ENCODE measurements at regions of chr1 and their contacts with region 1.

Region 1: DNA sequence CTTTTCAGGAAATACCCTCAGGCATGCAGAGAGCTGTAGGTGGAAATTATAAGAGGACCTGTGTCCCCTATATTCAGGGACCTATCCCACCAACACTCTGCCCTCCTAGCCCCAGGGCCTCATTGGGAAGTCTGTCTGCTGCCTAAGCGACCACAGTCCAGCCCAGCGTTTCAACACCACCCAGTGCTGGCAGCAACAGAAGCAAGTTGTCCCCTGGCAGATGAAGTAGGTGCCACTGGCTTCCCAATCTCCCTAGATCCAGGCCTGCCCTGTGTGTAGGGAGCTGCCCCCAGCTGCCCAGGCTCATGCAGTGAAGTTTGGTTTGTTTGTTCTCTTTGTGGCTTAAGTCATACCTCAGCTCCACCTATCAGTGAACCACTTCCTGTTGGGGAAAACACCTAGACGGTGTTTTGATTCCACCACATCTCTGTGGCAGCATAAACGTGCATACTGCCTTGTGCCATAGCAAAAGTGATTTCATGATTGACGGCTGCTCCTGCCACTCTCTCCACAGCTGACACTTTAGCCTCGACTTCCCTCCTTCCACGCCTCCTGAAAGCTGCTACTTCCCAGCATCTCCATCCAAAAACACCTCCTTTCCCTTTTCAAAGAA is 8.1 kb upstream of the LEFTY1 start:
- DNase-seq: peak; percentile 87 to 92 (median 88)
- H3K4me3 ChIP-seq: peak overlapping the region in 1 of 2 donors; percentile 13
- H3K4me3 Mint-ChIP-seq: peak overlapping the region; percentile 72 to 92 (median 82)
- H3K27ac ChIP-seq: peak overlapping the region; percentile 72
- H3K27ac Mint-ChIP-seq: peak overlapping the region; percentile 94 to 99 (median 98)
- H3K4me1 ChIP-seq: peaks cover 45% of the 10 kb centered on the region
- H3K4me1 Mint-ChIP-seq: peaks cover 34 to 65% (median 46%) of the 10 kb centered on the region in 4 donors
- H3K27me3 ChIP-seq: no peaks in the 10 kb centered on the region
- H3K27me3 Mint-ChIP-seq: no peaks in the 10 kb centered on the region

Region 2: DNA sequence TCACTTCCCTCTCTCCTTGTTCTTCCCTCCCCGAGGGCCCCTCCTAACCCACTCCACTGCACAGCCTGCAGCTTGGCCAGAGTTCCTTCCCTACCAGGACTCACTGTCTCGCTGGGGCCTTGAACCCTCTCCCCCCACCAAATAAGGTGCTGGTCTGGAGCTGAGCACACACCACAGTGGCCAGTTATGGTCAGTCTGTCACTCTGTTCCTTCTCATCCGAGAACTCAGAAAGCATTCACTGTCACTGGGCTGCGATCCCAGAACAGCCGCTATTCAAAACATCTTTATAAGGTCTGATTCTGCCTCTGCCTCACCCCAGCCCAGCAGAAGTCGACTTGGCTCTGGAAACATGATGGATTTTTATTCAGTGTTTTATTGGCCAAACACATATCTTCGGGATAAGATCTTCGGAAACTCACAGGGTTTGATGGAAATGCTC is 449.4 kb before region 1 on chr1:
- CTCF ChIA-PET with region 1: no interaction called
- POLR2A ChIA-PET with region 1: interaction called, 15 read pairs
- intact Hi-C with region 1: no loop called
- DNase-seq: no peak
- H3K4me3 ChIP-seq: no peak overlapping the region
- H3K4me3 Mint-ChIP-seq: no peak overlapping the region
- H3K27ac ChIP-seq: no peak overlapping the region
- H3K27ac Mint-ChIP-seq: peak overlapping the region in 1 of 7 donors; percentile 17
- H3K4me1 ChIP-seq: peaks cover 47% of the 10 kb centered on the region
- H3K4me1 Mint-ChIP-seq: peaks cover 29 to 55% (median 43%) of the 10 kb centered on the region in 4 donors
- H3K27me3 ChIP-seq: no peaks in the 10 kb centered on the region
- H3K27me3 Mint-ChIP-seq: no peaks in the 10 kb centered on the region

Region 3: GRCh38 chr1:225845571-225846259 is 51.3 kb before region 1 on chr1:
- CTCF ChIA-PET with region 1: no interaction called
- POLR2A ChIA-PET with region 1: interaction called, 16 read pairs
- intact Hi-C with region 1: no loop called
- DNase-seq: peak in 3 of 5 donors; percentile 33 to 40 (median 33)
- H3K4me3 ChIP-seq: no peak overlapping the region
- H3K4me3 Mint-ChIP-seq: peak overlapping the region in 1 of 8 donors; percentile 36
- H3K27ac ChIP-seq: no peak overlapping the region
- H3K27ac Mint-ChIP-seq: no peak overlapping the region
- H3K4me1 ChIP-seq: peaks cover 41% of the 10 kb centered on the region
- H3K4me1 Mint-ChIP-seq: peaks cover 25 to 57% (median 38%) of the 10 kb centered on the region in 4 donors
- H3K27me3 ChIP-seq: no peaks in the 10 kb centered on the region
- H3K27me3 Mint-ChIP-seq: no peaks in the 10 kb centered on the region

Region 4: GRCh38 chr1:225866061-225866837 is 30.8 kb before region 1 on chr1:
- CTCF ChIA-PET with region 1: no interaction called
- POLR2A ChIA-PET with region 1: interaction called, 730 read pairs
- intact Hi-C with region 1: loop called (anchors 1 kb)
- DNase-seq: peak; percentile 69 to 89 (median 73)
- H3K4me3 ChIP-seq: no peak overlapping the region
- H3K4me3 Mint-ChIP-seq: peak overlapping the region in 7 of 8 donors; percentile 58 to 85 (median 76)
- H3K27ac ChIP-seq: peak overlapping the region; percentile 52
- H3K27ac Mint-ChIP-seq: peak overlapping the region; percentile 85 to 95 (median 90)
- H3K4me1 ChIP-seq: peaks cover 42% of the 10 kb centered on the region
- H3K4me1 Mint-ChIP-seq: peaks cover 31 to 60% (median 44%) of the 10 kb centered on the region in 4 donors
- H3K27me3 ChIP-seq: no peaks in the 10 kb centered on the region
- H3K27me3 Mint-ChIP-seq: no peaks in the 10 kb centered on the region

Region 5: DNA sequence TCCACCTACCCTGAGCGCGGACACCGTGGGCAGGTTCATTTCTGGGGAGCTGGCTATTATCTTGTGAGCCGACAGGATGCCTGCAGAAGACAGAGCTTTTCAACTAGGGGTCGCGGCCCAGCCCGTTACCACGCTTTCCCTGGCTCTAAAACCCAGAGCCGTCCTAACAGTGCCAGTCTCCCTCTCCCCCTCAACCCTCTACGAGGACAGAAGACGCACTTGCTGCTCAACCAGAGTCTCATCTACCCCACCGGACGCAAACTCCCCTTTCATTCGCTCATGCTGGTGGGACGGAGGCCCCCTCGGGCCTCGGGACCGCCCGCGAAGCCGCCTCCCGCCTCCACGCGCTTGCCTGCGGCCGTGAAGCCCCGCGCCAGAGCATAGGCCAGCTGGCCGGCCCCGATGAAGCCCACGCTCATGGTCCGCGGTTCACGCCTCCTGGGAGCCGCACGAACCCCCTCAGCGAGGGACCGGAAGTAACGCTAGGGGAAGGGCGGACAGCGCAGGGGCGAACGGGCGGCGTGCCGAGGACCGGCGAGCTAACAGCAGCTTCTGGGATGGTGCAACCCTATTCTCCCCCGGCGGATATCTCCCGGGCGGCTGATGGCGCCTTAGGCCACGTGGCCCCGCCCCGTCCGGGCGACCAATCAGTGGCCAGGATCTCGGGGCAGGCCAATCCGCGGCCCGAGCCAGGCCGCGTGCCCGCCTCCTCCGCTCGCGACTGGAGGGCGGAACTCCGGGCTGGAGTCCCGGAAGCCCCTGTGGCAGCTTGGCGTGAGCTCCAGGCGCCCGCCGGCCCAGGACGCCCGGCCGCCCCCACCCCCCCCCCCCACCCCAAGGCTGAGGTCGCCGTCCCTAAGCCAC is 26.9 kb after region 1 on chr1 and contains the start of gene PYCR2:
- CTCF ChIA-PET with region 1: no interaction called
- POLR2A ChIA-PET with region 1: interaction called, 61 read pairs
- intact Hi-C with region 1: loop called (anchors 1 kb)
- DNase-seq: peak; percentile 93 to 96 (median 95)
- H3K4me3 ChIP-seq: peak within 1 kb of the TSS; percentile 94 to 96
- H3K4me3 Mint-ChIP-seq: peak within 1 kb of the TSS; percentile 90 to 97 (median 94)
- H3K27ac ChIP-seq: peak within 1 kb of the TSS; percentile 85
- H3K27ac Mint-ChIP-seq: peak within 1 kb of the TSS; percentile 90 to 97 (median 95)
- H3K4me1 ChIP-seq: peaks cover 68% of the 10 kb centered on the region
- H3K4me1 Mint-ChIP-seq: peaks cover 13 to 52% (median 28%) of the 10 kb centered on the region in 4 donors
- H3K27me3 ChIP-seq: no peaks in the 10 kb centered on the region
- H3K27me3 Mint-ChIP-seq: no peaks in the 10 kb centered on the region
- total RNA-seq, gene PYCR2: 102 to 116 TPM

Measured in CD4-positive, alpha-beta memory T cell (primary cell).